ENCODE measurements at regions of chr10 and their contacts with region 1.

Region 1: DNA sequence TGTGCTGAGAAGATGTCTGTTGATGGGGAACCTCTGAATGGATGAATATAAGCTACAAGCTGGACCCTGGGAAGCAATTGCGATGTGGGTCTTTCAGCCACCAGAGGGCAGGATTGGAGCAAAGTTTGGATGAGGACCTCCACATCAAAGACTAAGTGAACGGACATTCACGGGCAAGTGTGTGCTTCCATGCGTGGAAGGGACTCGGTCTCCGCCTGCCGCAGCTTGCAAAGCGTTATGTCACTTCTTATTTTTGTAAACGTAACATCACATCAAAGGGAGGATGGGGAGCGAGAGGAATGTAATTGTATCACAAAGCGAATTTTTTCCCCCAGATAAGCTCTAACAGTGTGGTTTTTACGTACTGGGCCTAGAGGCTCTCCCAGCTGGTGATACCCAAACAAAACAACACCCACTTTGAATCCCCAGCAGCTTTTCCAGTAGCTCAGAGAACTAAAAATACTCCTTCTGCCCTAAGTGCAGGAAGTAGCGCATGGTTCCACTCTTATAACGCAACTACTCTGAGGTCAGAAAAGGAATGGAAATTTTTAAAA is 65.0 kb downstream of the VWA2 start:
- DNase-seq: peak; percentile 79 to 80
- ATAC-seq: peak; percentile 67 to 80
- H3K4me3 ChIP-seq: peak overlapping the region; percentile 29
- H3K27ac ChIP-seq: peak overlapping the region; percentile 62 to 78
- H3K4me1 ChIP-seq: peaks cover 28% of the 10 kb centered on the region
- CTCF ChIP-seq: peak; percentile 93
- EP300 ChIP-seq: no peak
- POLR2A ChIP-seq: no peak
- RAD21 ChIP-seq: peak; percentile 96 to 98

Region 2: DNA sequence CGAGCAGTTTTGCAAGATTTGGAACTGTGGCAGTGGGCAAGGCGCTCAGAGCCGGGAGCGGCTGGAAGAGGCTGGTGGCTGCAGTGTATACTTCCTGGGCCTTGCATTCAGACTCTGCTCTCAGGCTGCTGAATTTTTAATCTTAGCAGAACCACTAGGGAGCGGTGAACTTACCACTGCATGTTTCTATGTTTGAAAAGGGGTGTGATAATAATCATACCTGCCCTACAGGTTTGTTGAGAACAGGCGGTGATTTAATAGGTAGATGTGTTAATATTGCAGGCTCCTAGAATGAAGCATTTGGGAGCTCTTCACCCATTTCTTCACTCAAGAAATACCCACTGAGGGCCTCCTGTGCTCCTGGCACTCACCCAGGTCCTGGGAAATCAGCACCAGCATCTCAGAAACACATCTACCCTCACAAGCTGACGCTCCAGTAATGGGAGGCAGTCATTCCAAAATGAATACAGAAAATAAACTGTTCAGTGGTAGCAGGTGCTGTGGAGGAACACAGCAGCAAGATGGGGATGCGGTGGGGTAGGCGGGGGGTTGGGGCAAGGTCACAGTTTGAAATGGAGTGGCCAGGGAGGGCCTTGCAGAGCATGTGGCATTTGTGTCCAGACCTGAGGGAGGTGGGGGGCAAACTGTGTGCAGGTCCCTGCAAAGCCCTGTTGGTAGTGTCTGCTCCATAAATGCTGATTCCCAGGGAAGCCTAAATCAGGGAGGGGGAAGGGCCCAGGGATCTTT is 24.0 kb before region 1 on chr10:
- CTCF ChIA-PET with region 1: interaction called, 26 read pairs
- POLR2A ChIA-PET with region 1: no interaction called
- DNase-seq: no peak
- ATAC-seq: peak; percentile 14 to 17; a peak in 1 of 6 replicates
- H3K4me3 ChIP-seq: no peak overlapping the region
- H3K27ac ChIP-seq: no peak overlapping the region
- H3K4me1 ChIP-seq: no peaks in the 10 kb centered on the region
- CTCF ChIP-seq: no peak
- EP300 ChIP-seq: no peak
- POLR2A ChIP-seq: no peak
- RAD21 ChIP-seq: no peak

Region 3: GRCh38 chr10:114328874-114329273 is 24.8 kb after region 1 on chr10:
- CTCF ChIA-PET with region 1: interaction called, 18 read pairs
- POLR2A ChIA-PET with region 1: no interaction called
- DNase-seq: no peak
- ATAC-seq: no peak
- H3K4me3 ChIP-seq: no peak overlapping the region
- H3K27ac ChIP-seq: no peak overlapping the region; a peak in 1 of 6 replicates
- H3K4me1 ChIP-seq: peaks cover 21% of the 10 kb centered on the region
- CTCF ChIP-seq: no peak
- EP300 ChIP-seq: no peak
- POLR2A ChIP-seq: no peak
- RAD21 ChIP-seq: no peak

Region 4: GRCh38 chr10:114374053-114374791 is 70.1 kb after region 1 on chr10:
- CTCF ChIA-PET with region 1: interaction called, 11 read pairs
- POLR2A ChIA-PET with region 1: interaction called, 4 read pairs
- DNase-seq: no peak
- ATAC-seq: peak; percentile 41 to 44; a peak in 4 of 6 replicates
- H3K4me3 ChIP-seq: no peak overlapping the region
- H3K27ac ChIP-seq: peak overlapping the region; percentile 34 to 76; a peak in 4 of 6 replicates
- H3K4me1 ChIP-seq: peaks cover 60% of the 10 kb centered on the region
- CTCF ChIP-seq: no peak
- EP300 ChIP-seq: no peak
- POLR2A ChIP-seq: no peak
- RAD21 ChIP-seq: no peak

Region 5: GRCh38 chr10:114403541-114404161 is 99.6 kb after region 1 on chr10:
- CTCF ChIA-PET with region 1: interaction called, 76 read pairs
- POLR2A ChIA-PET with region 1: interaction called, 10 read pairs
- DNase-seq: peak; percentile 33 to 67
- ATAC-seq: peak; percentile 38 to 77; a peak in 4 of 6 replicates
- H3K4me3 ChIP-seq: peak overlapping the region; percentile 83
- H3K27ac ChIP-seq: peak overlapping the region; percentile 74 to 97
- H3K4me1 ChIP-seq: peaks cover 48% of the 10 kb centered on the region
- CTCF ChIP-seq: peak; percentile 50
- EP300 ChIP-seq: no peak
- POLR2A ChIP-seq: no peak
- RAD21 ChIP-seq: peak; percentile 58 to 70

Region 6: GRCh38 chr10:114448897-114449296 is 144.8 kb after region 1 on chr10:
- CTCF ChIA-PET with region 1: interaction called, 21 read pairs
- POLR2A ChIA-PET with region 1: no interaction called
- DNase-seq: no peak
- ATAC-seq: no peak
- H3K4me3 ChIP-seq: no peak overlapping the region
- H3K27ac ChIP-seq: no peak overlapping the region
- H3K4me1 ChIP-seq: no peaks in the 10 kb centered on the region
- CTCF ChIP-seq: no peak
- EP300 ChIP-seq: no peak
- POLR2A ChIP-seq: no peak
- RAD21 ChIP-seq: no peak

Region 7: DNA sequence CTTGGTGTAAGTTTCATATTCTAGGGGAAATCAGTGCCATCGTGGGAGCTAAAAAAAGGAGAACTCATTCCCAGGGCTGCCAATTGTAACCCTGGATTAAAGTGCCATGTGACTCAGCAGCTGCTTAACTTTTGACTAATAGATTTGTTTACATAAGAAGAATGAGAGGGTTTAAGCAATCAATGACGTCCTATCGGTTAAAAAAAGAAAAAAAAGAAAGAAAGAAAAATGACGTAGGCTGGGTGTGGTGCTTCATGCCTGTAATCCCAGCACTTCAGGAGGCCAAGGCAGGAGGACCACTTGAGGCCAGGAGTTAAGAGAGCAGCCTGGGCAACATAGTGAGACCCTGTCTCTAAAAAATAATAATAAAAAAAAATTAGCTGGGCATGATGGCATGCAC is 216.4 kb after region 1 on chr10:
- CTCF ChIA-PET with region 1: interaction called, 10 read pairs
- POLR2A ChIA-PET with region 1: no interaction called
- DNase-seq: peak; percentile 81 to 90
- ATAC-seq: peak; percentile 45 to 50; a peak in 5 of 6 replicates
- H3K4me3 ChIP-seq: no peak overlapping the region
- H3K27ac ChIP-seq: peak overlapping the region; percentile 75 to 83
- H3K4me1 ChIP-seq: peaks cover 68% of the 10 kb centered on the region
- CTCF ChIP-seq: no peak
- EP300 ChIP-seq: peak; percentile 41 to 49; a peak in 3 of 5 replicates
- POLR2A ChIP-seq: no peak
- RAD21 ChIP-seq: no peak

Region 8: DNA sequence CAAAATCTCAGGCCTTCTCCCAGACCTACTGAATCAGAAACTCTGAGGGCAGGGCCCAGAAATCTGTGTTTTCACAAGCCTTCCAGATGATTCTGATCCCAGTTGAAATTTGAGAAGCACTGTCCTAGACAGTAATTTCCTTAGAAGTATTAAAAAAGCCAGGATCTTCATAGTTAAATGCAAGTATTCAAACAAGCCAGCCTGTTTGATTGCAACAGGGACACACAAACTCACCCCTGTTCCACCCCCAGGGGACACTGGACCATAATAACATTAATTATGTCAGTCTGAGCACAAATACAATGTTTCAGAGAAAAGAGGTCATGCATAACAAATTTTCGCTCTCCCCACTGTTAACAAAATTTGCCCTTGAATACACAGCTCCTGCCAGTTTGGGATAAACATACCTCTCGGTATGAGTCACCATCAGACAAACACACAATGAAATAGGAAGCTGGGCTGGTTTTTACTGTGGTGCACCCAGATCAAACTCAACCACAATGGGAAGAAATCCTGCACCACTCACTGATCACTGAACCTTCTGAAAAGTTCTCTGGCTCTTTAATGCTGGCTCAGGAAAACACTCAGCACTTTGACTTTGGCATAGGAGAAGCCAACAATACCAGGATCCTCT is 319.7 kb after region 1 on chr10:
- CTCF ChIA-PET with region 1: no interaction called
- POLR2A ChIA-PET with region 1: no interaction called
- DNase-seq: peak; percentile 65 to 66
- ATAC-seq: peak; percentile 85 to 94
- H3K4me3 ChIP-seq: no peak overlapping the region
- H3K27ac ChIP-seq: peak overlapping the region; percentile 60 to 86
- H3K4me1 ChIP-seq: peaks cover 37% of the 10 kb centered on the region
- CTCF ChIP-seq: no peak
- EP300 ChIP-seq: peak in 1 of 2 experiments; percentile 32; a peak in 1 of 5 replicates
- POLR2A ChIP-seq: no peak
- RAD21 ChIP-seq: peak; percentile 11 to 32; a peak in 1 of 5 replicates